ENCODE measurements at regions of chr22 and their contacts with region 1.

Region 1: GRCh38 chr22:33920927-33921524 is 750 bp upstream of the LARGE1 start:
- DNase-seq: peak; percentile 99
- ATAC-seq: peak; percentile 89 to 96 (median 94)
- H3K4me3 ChIP-seq: peak overlapping the region; percentile 49 to 87 (median 72)
- H3K27ac ChIP-seq: peak overlapping the region in 9 of 10 donors; percentile 63 to 91 (median 78)
- H3K4me1 ChIP-seq: peaks cover 0 to 56% (median 37%) of the 10 kb centered on the region in 9 donors
- H3K27me3 ChIP-seq: peaks cover 0 to 57% (median 0%) of the 10 kb centered on the region in 7 donors
- CTCF ChIP-seq: no peak

Region 2: DNA sequence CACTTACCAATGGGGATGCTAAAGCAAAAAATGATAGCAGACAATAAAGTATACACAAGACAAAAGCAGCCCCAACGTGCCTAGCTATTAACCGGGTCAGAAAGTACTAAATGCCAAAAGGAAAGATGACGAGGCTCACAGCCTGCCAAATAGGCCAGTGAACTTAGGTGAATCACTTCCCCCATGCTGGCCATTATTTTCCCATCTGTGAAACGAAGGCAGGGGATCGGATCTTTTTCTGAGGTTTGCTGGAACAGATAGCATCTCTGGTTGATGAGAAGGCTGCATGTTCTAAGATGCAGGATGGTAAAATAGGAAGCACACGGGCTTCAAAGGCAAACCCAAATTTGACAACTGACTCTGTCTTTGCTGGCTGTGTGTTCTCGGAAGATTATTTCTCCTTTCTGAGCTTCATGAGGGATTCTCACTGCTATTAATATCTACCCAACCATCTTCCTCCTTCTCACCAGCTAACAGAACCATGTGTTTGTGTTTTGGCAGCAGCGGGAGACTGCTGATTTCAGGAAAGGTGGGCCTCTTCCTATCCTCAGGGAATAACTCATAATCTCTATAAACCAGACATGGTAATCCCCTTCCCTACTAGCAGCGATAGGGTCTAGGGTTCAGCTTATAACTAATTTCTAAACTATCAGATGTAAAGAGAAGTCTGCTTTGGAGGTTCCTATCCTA is 391.5 kb before region 1 on chr22:
- intact Hi-C with region 1: loop called in 5 of 10 experiments (anchors 5 to 10 kb)
- DNase-seq: peak in 1 of 2 donors; percentile 23
- ATAC-seq: peak; percentile 41 to 88 (median 57)
- H3K4me3 ChIP-seq: no peak overlapping the region
- H3K27ac ChIP-seq: peak overlapping the region in 5 of 10 donors; percentile 20 to 55 (median 52)
- H3K4me1 ChIP-seq: peaks cover 0 to 33% (median 20%) of the 10 kb centered on the region in 9 donors
- H3K27me3 ChIP-seq: no peaks in the 10 kb centered on the region
- CTCF ChIP-seq: no peak

Region 3: GRCh38 chr22:33666279-33666960 is 254.6 kb before region 1 on chr22:
- intact Hi-C with region 1: loop called in 2 of 10 experiments (anchors 10 kb)
- DNase-seq: no peak
- ATAC-seq: peak in 6 of 8 donors; percentile 24 to 57 (median 44)
- H3K4me3 ChIP-seq: no peak overlapping the region
- H3K27ac ChIP-seq: no peak overlapping the region
- H3K4me1 ChIP-seq: peaks cover 0 to 74% (median 40%) of the 10 kb centered on the region in 9 donors
- H3K27me3 ChIP-seq: no peaks in the 10 kb centered on the region
- CTCF ChIP-seq: no peak

Region 4: DNA sequence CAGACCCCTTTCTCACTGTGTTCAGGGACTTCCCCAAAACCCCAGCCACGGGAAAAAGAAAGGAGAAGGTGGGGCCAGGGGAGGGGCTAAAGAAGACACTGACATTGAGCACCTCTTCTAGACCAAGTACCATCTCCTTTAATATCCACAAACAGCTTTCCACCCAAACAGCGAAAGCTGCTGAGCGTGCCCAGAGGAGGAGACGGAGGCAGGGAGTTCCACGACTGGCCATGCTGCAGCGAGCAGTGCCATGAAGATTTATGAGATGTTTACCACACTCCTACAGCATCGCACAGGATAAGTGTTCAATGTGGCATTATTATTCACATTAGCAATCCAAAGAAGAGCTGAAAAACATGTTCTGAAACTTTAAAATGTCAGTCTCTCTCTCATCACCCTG is 128.2 kb before region 1 on chr22:
- intact Hi-C with region 1: no loop called
- DNase-seq: no peak
- ATAC-seq: peak in 5 of 8 donors; percentile 17 to 61 (median 51)
- H3K4me3 ChIP-seq: peak overlapping the region in 1 of 10 donors; percentile 12
- H3K27ac ChIP-seq: peak overlapping the region in 6 of 10 donors; percentile 8 to 69 (median 52)
- H3K4me1 ChIP-seq: peaks cover 0 to 39% (median 14%) of the 10 kb centered on the region in 9 donors
- H3K27me3 ChIP-seq: no peaks in the 10 kb centered on the region
- CTCF ChIP-seq: no peak

Region 5: GRCh38 chr22:33819743-33820142 is 101.3 kb before region 1 on chr22:
- intact Hi-C with region 1: loop called in 1 of 10 experiments (anchors 5 kb)
- DNase-seq: no peak
- ATAC-seq: no peak
- H3K4me3 ChIP-seq: no peak overlapping the region
- H3K27ac ChIP-seq: no peak overlapping the region
- H3K4me1 ChIP-seq: peaks cover 0 to 30% (median 13%) of the 10 kb centered on the region in 9 donors
- H3K27me3 ChIP-seq: no peaks in the 10 kb centered on the region
- CTCF ChIP-seq: no peak

Region 6: GRCh38 chr22:33882991-33883960 is 37.8 kb before region 1 on chr22:
- intact Hi-C with region 1: loop called in 2 of 10 experiments (anchors 5 kb)
- DNase-seq: no peak
- ATAC-seq: peak in 1 of 8 donors; percentile 14
- H3K4me3 ChIP-seq: no peak overlapping the region
- H3K27ac ChIP-seq: peak overlapping the region in 8 of 10 donors; percentile 18 to 61 (median 54)
- H3K4me1 ChIP-seq: peaks cover 0 to 65% (median 26%) of the 10 kb centered on the region in 9 donors
- H3K27me3 ChIP-seq: no peaks in the 10 kb centered on the region
- CTCF ChIP-seq: no peak

Region 7: GRCh38 chr22:34198976-34199375 is 277.9 kb after region 1 on chr22:
- intact Hi-C with region 1: no loop called
- DNase-seq: no peak
- ATAC-seq: no peak
- H3K4me3 ChIP-seq: no peak overlapping the region
- H3K27ac ChIP-seq: no peak overlapping the region
- H3K4me1 ChIP-seq: no peaks in the 10 kb centered on the region
- H3K27me3 ChIP-seq: peaks cover 0 to 3% (median 0%) of the 10 kb centered on the region in 7 donors
- CTCF ChIP-seq: no peak

Region 8: GRCh38 chr22:34344702-34345101 is 423.7 kb after region 1 on chr22:
- intact Hi-C with region 1: loop called in 3 of 10 experiments (anchors 10 kb)
- DNase-seq: no peak
- ATAC-seq: peak in 4 of 8 donors; percentile 38 to 50 (median 44)
- H3K4me3 ChIP-seq: no peak overlapping the region
- H3K27ac ChIP-seq: no peak overlapping the region
- H3K4me1 ChIP-seq: no peaks in the 10 kb centered on the region
- H3K27me3 ChIP-seq: no peaks in the 10 kb centered on the region
- CTCF ChIP-seq: peak in 5 of 9 donors; percentile 13 to 40 (median 33)